ENCODE measurements at regions of chr4 and their contacts with region 1.

Region 1: DNA sequence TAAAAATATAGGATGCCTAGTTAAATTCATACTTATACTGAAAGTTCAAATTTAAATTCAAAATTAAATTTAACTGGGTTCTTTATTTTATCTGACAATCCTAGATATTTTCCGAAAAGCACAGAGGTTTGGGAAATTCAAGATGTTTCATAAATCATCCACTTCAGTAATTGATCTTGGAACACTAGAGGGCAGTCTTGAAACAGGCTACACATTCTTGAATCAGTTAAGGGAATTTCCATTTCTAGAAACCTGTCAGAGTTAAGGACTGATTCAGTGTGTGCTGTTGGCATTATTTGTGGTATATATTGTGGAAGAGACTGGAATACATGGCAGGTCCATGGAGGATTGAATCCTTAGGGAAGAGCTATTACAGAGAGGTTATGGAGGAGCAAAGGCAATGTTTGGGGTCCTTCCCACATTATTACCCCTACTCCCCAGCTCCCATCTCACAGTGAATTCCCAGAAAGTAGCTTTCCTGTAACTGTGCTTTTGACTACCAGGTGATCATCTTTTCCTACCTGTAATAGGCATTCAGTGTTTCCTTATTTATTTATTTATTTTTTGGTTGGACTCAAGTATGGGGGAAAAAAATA is 92.9 kb downstream of the EGF start:
- DNase-seq: peak; percentile 43
- ATAC-seq: peak; percentile 91
- H3K4me3 ChIP-seq: no peak overlapping the region
- H3K27ac ChIP-seq: no peak overlapping the region
- H3K4me1 ChIP-seq: peaks cover 4% of the 10 kb centered on the region; the same call in 1 of the 2 replicates
- H3K27me3 ChIP-seq: no peaks in the 10 kb centered on the region
- CTCF ChIP-seq: peak; percentile 58 to 91 (median 62); a peak in 4 of 6 replicates
- EP300 ChIP-seq: no peak
- POLR2A ChIP-seq: no peak
- RAD21 ChIP-seq: peak; percentile 98

Region 2: GRCh38 chr4:110020139-110020538 is 14.6 kb after region 1 on chr4:
- CTCF ChIA-PET with region 1: interaction called, 28 read pairs
- POLR2A ChIA-PET with region 1: no interaction called
- RAD21 ChIA-PET with region 1: interaction called, 6 read pairs
- SMC1A ChIA-PET with region 1: interaction called, 14 read pairs
- in situ Hi-C with region 1: no loop called
- intact Hi-C with region 1: no loop called
- DNase-seq: no peak
- ATAC-seq: no peak
- H3K4me3 ChIP-seq: no peak overlapping the region
- H3K27ac ChIP-seq: no peak overlapping the region
- H3K4me1 ChIP-seq: no peaks in the 10 kb centered on the region
- H3K27me3 ChIP-seq: no peaks in the 10 kb centered on the region; a peak in 2 of 4 replicates
- CTCF ChIP-seq: no peak
- EP300 ChIP-seq: no peak
- POLR2A ChIP-seq: no peak
- RAD21 ChIP-seq: no peak

Region 3: DNA sequence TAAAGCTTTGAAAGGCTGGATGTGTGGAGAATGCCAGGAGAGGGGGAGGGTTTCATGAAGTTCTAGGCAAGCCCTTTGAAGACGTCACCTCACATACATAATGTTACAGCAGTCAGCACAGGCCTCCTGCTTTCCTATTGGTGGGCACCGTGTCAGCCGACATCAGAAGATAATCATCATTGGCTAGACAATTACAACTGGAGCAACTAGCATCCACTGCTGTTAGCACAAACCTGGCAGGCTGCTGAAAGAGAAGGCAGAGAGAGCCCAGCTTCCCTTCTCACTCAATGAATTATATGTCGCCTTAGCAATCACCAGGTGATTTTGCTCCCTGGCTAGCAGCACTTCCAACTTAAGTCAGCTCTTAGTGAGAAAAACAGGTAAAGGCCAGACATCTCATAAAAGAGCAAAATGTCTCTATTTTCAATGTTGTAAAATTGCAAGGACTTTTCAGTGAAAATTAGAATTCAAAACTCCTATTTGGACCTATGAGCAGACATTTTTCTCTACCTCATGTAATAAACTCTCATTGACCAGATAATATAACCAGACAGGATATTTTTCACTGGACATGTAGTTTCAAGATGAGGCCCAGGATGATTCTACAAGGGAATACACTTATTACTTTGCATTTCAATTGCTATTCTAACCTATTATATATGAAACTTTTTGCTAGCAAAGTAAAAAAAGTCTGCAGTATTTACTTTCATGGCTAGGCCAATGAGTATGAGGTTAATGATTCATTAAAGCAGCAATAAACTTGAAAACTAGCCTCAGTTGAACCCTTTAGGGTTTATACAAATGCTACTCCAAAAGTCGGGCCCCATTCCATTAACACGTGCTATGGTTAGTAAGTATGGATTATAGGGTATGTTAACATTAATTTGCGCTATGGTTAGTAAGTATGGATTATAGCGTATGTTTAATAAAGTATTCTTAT is 188.5 kb after region 1 on chr4:
- CTCF ChIA-PET with region 1: interaction called, 3 read pairs
- POLR2A ChIA-PET with region 1: no interaction called
- RAD21 ChIA-PET with region 1: interaction called, 4 read pairs
- SMC1A ChIA-PET with region 1: no interaction called
- in situ Hi-C with region 1: no loop called
- intact Hi-C with region 1: loop called (anchors 5 kb)
- DNase-seq: peak; percentile 95
- ATAC-seq: peak; percentile 74
- H3K4me3 ChIP-seq: no peak overlapping the region
- H3K27ac ChIP-seq: peak overlapping the region; percentile 75
- H3K4me1 ChIP-seq: peaks cover 19% of the 10 kb centered on the region
- H3K27me3 ChIP-seq: no peaks in the 10 kb centered on the region
- CTCF ChIP-seq: no peak
- EP300 ChIP-seq: no peak
- POLR2A ChIP-seq: peak; percentile 89
- RAD21 ChIP-seq: no peak

Region 4: DNA sequence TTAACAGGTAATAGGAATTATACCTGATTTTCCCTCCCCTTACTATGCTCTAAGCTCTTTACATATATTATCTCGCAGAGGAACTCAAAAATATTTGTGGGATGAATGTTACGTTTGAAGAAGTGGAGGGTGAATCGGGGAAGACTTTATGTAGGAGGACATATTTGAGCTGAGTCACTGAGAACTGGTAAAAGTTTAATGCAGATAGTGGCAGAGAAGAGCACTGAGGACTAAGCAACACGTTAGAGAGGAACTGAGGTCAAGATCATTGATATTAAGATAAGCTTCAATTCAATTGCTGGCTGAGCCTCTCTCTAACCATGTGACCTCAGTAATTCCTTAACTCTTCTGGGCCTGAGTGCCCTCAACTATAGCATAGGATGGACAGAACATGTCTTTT is 219.3 kb after region 1 on chr4:
- CTCF ChIA-PET with region 1: interaction called, 15 read pairs
- POLR2A ChIA-PET with region 1: no interaction called
- RAD21 ChIA-PET with region 1: no interaction called
- SMC1A ChIA-PET with region 1: no interaction called
- in situ Hi-C with region 1: no loop called
- intact Hi-C with region 1: no loop called
- DNase-seq: no peak
- ATAC-seq: no peak
- H3K4me3 ChIP-seq: no peak overlapping the region
- H3K27ac ChIP-seq: no peak overlapping the region
- H3K4me1 ChIP-seq: no peaks in the 10 kb centered on the region
- H3K27me3 ChIP-seq: no peaks in the 10 kb centered on the region
- CTCF ChIP-seq: no peak
- EP300 ChIP-seq: no peak
- POLR2A ChIP-seq: no peak
- RAD21 ChIP-seq: no peak

Region 5: GRCh38 chr4:110310795-110311194 is 305.2 kb after region 1 on chr4:
- CTCF ChIA-PET with region 1: interaction called, 16 read pairs
- POLR2A ChIA-PET with region 1: no interaction called
- RAD21 ChIA-PET with region 1: interaction called, 9 read pairs
- SMC1A ChIA-PET with region 1: interaction called, 9 read pairs
- in situ Hi-C with region 1: loop called (anchors 10 kb)
- intact Hi-C with region 1: loop called (anchors 1 kb)
- DNase-seq: peak; percentile 17
- ATAC-seq: peak; percentile 88
- H3K4me3 ChIP-seq: no peak overlapping the region
- H3K27ac ChIP-seq: no peak overlapping the region
- H3K4me1 ChIP-seq: no peaks in the 10 kb centered on the region
- H3K27me3 ChIP-seq: no peaks in the 10 kb centered on the region
- CTCF ChIP-seq: no peak
- EP300 ChIP-seq: no peak
- POLR2A ChIP-seq: no peak
- RAD21 ChIP-seq: no peak

Region 6: GRCh38 chr4:110510955-110511544 is 505.5 kb after region 1 on chr4:
- CTCF ChIA-PET with region 1: interaction called, 812 read pairs
- POLR2A ChIA-PET with region 1: no interaction called
- RAD21 ChIA-PET with region 1: interaction called, 52 read pairs
- SMC1A ChIA-PET with region 1: interaction called, 114 read pairs
- in situ Hi-C with region 1: no loop called
- intact Hi-C with region 1: loop called (anchors 1 kb)
- DNase-seq: no peak
- ATAC-seq: peak; percentile 86
- H3K4me3 ChIP-seq: no peak overlapping the region
- H3K27ac ChIP-seq: no peak overlapping the region
- H3K4me1 ChIP-seq: no peaks in the 10 kb centered on the region
- H3K27me3 ChIP-seq: no peaks in the 10 kb centered on the region
- CTCF ChIP-seq: peak; percentile 53 to 70 (median 53); a peak in 5 of 6 replicates
- EP300 ChIP-seq: no peak
- POLR2A ChIP-seq: no peak
- RAD21 ChIP-seq: peak; percentile 75

Region 7: DNA sequence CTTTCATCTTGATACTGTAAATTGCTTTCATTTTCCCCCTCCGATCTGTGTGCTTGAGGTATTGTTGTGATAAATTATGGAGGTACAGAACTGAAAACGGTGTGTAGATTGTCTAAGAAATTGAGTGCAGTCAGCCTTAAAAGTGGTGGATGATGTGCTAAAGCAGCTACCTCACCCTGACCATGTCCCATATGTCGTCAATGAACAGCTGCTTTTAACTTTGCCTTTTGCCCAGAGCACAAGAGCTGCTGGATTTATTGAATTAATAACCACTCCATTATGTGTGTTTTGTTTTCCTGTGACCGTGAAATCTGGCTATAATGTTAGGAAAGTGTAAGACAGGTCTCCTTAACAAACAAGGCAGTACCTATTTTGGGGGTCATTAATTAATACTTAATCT is 1199.2 kb after region 1 on chr4:
- CTCF ChIA-PET with region 1: no interaction called
- POLR2A ChIA-PET with region 1: no interaction called
- RAD21 ChIA-PET with region 1: no interaction called
- SMC1A ChIA-PET with region 1: no interaction called
- in situ Hi-C with region 1: no loop called
- intact Hi-C with region 1: no loop called
- DNase-seq: no peak
- ATAC-seq: no peak
- H3K4me3 ChIP-seq: no peak overlapping the region
- H3K27ac ChIP-seq: no peak overlapping the region
- H3K4me1 ChIP-seq: no peaks in the 10 kb centered on the region
- H3K27me3 ChIP-seq: no peaks in the 10 kb centered on the region
- CTCF ChIP-seq: no peak
- EP300 ChIP-seq: no peak
- POLR2A ChIP-seq: no peak
- RAD21 ChIP-seq: no peak

Region 8: DNA sequence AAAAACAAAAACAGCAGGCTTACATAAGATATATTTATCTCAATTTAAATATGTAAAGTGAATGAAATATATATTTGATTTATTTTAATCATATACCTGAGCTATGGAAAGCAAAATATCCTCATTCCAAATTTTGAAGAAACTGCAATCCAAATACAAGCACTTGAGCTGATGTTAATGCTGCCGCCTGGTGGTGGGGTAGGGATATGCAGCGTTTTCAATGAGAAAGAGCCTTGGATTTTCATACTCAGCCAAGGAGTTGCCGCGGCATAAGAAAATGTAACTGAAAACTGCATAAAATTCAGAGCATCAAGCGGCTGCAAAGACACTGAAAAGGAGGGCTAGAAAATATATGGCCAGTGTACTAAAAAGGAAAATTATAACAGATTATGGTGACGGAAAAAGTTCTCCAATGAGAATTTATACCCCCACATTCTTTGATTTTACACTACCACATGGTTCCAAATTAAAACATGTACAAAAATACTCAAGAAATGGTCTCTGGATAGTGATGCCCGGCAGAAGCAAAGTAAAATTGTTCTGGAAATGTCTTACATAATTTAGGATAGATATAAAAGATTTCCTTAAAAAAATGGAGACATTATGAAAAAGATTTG is 1277.6 kb after region 1 on chr4:
- CTCF ChIA-PET with region 1: no interaction called
- POLR2A ChIA-PET with region 1: no interaction called
- RAD21 ChIA-PET with region 1: no interaction called
- SMC1A ChIA-PET with region 1: no interaction called
- in situ Hi-C with region 1: loop called (anchors 25 kb)
- intact Hi-C with region 1: no loop called
- DNase-seq: no peak
- ATAC-seq: peak; percentile 63
- H3K4me3 ChIP-seq: no peak overlapping the region
- H3K27ac ChIP-seq: no peak overlapping the region
- H3K4me1 ChIP-seq: no peaks in the 10 kb centered on the region
- H3K27me3 ChIP-seq: no peaks in the 10 kb centered on the region
- CTCF ChIP-seq: peak; percentile 86 to 94 (median 90)
- EP300 ChIP-seq: no peak
- POLR2A ChIP-seq: no peak
- RAD21 ChIP-seq: peak; percentile 75

Measured in GM12878 (cell line).